ENCODE measurements at regions of chr19 and their contacts with region 1.

Region 1: DNA sequence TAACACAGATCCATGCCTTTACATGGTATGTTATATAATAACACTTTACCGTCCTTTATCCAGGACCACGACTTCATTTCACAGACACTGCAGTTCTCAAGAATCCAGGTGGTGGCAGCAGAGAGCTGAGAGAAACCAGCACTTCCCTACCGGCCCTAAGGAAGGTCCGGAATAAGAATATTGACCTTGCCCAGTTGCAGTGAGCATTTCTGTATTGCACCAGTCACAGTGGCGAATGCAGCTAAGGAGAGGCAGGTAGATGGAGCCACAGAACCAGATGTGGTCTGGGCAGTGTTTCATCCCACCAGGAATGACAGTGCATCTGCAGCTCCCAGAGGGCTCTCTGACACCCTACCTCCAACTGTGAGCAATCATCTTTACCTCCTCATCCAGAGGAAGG is 44.6 kb downstream of the ZNF787 start:
- DNase-seq: peak in 1 of 2 donors; percentile 64
- ATAC-seq: peak; percentile 61

Region 2: DNA sequence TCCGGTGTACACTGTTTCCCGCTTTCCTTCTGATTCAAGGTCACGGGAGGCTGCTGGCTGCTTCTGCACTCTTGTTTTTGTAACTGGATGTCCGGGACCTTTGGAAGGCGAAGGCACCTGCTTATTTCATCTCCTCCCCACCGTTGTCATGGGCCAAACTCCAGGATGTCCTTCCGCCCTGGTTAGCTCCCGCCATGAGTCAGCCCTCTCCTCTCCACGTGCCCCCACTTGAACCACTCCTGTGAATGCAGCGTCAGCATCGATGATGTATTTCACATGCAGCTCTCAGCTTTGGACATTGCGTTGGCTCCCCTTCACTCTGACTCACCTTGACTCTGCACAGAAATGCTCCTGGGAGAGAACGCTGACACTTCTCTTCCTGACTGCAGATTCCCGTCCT is 93.8 kb after region 1 on chr19:
- intact Hi-C with region 1: loop called in 1 of 2 experiments (anchors 10 kb)
- DNase-seq: no peak
- ATAC-seq: no peak

Region 3: DNA sequence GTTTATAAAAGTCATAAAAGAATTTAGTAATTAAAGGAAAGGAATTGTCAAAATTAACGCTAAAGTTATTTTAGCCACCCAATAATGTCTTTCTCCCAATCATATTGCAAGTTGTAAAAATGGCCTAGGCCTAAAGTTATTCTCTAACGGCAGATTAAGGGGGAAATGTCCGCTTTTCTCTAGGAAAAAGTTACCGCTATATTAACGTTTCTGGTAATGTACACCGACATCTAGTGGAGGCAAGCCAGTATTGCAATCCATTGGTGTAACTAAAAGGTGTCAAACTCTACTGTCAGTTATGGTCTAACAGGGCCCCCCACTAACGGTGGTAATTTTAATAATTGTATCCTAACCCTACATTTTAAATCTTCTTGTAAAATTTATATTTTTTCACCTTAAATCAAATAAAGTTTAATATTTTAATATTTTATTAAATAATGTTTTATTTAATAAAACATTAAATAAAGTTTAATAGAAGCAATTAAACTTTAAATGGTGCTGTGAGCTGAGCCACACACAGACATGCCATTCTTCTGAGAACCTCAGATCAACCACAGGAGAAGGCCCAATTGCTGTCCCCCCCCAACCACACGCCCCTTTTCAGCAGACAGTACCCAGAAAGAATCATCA is 274.0 kb after region 1 on chr19:
- intact Hi-C with region 1: loop called in 1 of 2 experiments (anchors 10 kb)
- DNase-seq: peak in 1 of 2 donors; percentile 36
- ATAC-seq: no peak